WTC11 (cell line): ENCODE measurements at regions of chr22 and their contacts with region 1.

Region 1: GRCh38 chr22:39405346-39406085 is 5.9 kb downstream of the TAB1 start:
- DNase-seq: no peak
- ATAC-seq: no peak
- H3K4me3 Mint-ChIP-seq: no peak overlapping the region
- H3K27ac Mint-ChIP-seq: peak overlapping the region; percentile 43; the same call in 1 of the 2 replicates
- H3K4me1 Mint-ChIP-seq: peaks cover 6% of the 10 kb centered on the region
- H3K27me3 Mint-ChIP-seq: no peaks in the 10 kb centered on the region
- CTCF ChIP-seq: no peak

Region 2: DNA sequence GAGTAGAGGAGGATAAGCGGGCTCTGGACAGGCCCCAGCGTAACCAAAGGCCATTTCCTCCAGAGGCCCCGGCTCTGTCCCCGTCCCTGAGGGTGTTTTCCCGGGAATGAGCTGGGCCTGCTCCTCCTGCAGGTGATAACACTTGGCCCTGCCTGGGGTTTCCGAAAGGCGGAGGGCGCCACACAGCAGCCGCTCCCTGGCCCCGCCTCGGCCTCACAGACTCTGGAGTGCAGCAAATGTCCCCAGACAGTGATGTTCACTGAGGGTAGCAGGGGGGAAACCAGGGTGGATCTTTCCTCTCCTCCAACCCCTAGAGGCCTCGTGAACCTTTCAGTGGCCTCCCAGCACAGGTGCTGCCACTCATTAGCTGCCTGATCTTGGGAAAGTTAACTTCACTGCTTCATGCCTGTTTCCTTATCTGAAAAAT is 40.8 kb after region 1 on chr22:
- CTCF ChIA-PET with region 1: interaction called, 15 read pairs
- POLR2A ChIA-PET with region 1: no interaction called
- DNase-seq: peak; percentile 64
- ATAC-seq: peak; percentile 86
- H3K4me3 Mint-ChIP-seq: no peak overlapping the region
- H3K27ac Mint-ChIP-seq: no peak overlapping the region; the same call in 1 of the 2 replicates
- H3K4me1 Mint-ChIP-seq: peaks cover 24% of the 10 kb centered on the region
- H3K27me3 Mint-ChIP-seq: peaks cover 3% of the 10 kb centered on the region
- CTCF ChIP-seq: no peak

Region 3: DNA sequence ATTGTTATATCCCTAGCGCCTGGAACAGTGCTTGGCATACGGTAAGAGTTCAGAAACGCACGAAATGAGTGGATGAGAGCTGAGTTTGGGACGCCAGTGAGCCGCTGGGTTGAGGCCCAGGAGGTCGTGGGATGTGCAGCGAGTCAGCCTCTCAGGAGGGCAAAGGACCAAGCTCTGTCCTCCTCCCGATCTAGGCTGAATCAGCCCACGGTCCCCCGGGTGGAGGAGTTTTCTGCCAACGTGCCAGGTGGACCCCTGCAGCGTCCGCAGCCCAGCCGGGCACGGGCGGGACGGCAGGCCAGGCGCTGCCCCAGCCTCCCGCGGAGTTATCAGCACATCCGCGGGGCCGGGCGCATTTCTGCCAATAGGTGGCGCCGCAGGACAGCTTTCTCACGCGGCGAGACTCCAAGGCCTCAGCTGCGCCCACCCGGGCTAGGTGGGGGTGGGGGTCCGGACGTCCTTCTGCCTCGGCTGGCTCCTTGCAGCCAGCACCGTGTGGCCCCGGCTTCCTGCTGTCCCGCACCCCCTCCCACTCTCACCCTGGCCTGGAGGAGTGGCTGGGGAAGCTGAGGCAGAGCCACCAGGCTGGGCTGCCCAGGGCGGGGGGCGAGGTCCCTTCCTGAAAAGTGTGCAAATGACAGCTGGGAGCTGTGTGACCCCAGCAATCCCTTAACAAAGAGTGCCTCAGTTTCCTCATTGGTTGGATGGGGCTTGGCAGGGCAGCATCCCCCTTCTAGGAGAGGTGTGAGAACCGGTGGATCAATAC is 129.3 kb after region 1 on chr22:
- CTCF ChIA-PET with region 1: no interaction called
- POLR2A ChIA-PET with region 1: no interaction called
- DNase-seq: peak; percentile 96
- ATAC-seq: peak; percentile 12
- H3K4me3 Mint-ChIP-seq: peak overlapping the region; percentile 56
- H3K27ac Mint-ChIP-seq: peak overlapping the region; percentile 75
- H3K4me1 Mint-ChIP-seq: peaks cover 55% of the 10 kb centered on the region
- H3K27me3 Mint-ChIP-seq: no peaks in the 10 kb centered on the region
- CTCF ChIP-seq: peak; percentile 94